Activated CD8-positive, alpha-beta memory T cell treated with anti-CD3 and anti-CD28 coated beads, Interleukin-2, amount 10 ng/mL, durations not matched to agents 7 days and 5 days (primary cell): ENCODE measurements at regions of chr5 and their contacts with region 1.

Region 1: GRCh38 chr5:142012792-142013388 is at the start of gene GNPDA1:
- DNase-seq: peak; percentile 74
- ATAC-seq: peak; percentile 59
- H3K4me3 Mint-ChIP-seq: peak within 1 kb of the TSS; percentile 74
- H3K27ac Mint-ChIP-seq: peak within 1 kb of the TSS; percentile 81
- H3K4me1 Mint-ChIP-seq: peaks cover 57% of the 10 kb centered on the region
- H3K27me3 Mint-ChIP-seq: peaks cover 14% of the 10 kb centered on the region
- total RNA-seq, gene GNPDA1: 7.7 to 10.0 TPM

Region 2: DNA sequence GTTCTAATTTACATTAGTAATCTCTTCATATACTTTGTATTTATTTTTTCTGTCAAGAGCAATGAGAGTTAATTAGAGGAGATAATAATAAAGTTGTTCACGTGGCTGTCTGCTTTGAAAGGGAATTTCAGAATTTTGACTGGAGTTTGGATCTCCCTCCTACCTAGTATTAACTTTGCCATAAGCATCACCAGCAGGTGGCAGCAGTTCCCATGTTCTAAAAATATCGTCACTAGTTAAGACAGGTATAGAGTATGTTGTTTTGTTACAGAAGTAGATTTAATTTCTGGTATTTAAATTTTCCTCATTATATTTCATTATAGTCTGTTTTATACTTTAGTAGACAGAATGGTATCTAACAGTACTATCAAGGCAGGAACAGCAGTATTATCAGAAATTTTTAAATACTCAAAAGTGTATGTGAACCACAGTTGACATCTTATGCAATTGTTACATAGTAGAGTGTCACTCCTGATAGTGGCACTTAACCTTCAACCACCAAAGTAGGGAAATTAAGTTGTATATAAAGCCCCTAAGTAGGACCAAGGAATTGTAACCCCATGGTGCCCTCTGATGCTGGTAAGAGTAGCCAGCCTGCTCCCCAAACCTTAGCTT is 20.4 kb before region 1 on chr5:
- CTCF ChIA-PET with region 1: interaction called, 72 read pairs
- DNase-seq: peak; percentile 84
- ATAC-seq: peak; percentile 71
- H3K4me3 Mint-ChIP-seq: no peak overlapping the region
- H3K27ac Mint-ChIP-seq: no peak overlapping the region
- H3K4me1 Mint-ChIP-seq: no peaks in the 10 kb centered on the region
- H3K27me3 Mint-ChIP-seq: no peaks in the 10 kb centered on the region

Region 3: DNA sequence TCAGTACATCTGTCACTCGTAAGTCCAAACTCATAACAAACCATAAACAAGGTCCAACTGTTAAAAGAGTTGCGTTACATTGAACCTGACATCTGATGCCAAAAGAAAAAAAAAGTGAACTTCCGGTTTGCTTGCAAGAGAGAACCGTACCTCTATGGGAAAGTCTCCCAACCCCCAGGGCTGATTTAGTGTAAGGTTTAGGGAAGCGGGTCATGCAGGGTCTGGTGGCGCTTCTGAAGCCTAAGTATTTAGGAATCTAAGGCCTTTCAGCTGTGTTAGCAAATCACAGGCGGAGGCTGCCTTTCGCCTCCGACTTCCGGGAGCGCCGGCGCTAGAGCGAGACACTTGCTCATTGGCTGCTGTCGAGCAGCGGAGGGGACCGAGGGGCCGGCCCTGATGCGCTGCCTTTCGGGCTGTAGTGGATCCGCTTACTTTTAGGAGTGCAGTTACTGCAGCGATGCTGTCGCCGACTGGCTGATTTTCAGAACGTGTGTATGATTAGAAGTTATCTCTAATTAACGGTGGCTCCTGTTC is 11.9 kb after region 1 on chr5:
- CTCF ChIA-PET with region 1: interaction called, 12 read pairs
- DNase-seq: peak; percentile 92
- ATAC-seq: peak; percentile 100
- H3K4me3 Mint-ChIP-seq: peak overlapping the region; percentile 81
- H3K27ac Mint-ChIP-seq: peak overlapping the region; percentile 98
- H3K4me1 Mint-ChIP-seq: peaks cover 16% of the 10 kb centered on the region
- H3K27me3 Mint-ChIP-seq: peaks cover 19% of the 10 kb centered on the region

Region 4: GRCh38 chr5:142108432-142109330 is 95.8 kb after region 1 on chr5 and contains the start of gene NDFIP1:
- CTCF ChIA-PET with region 1: interaction called, 42 read pairs
- DNase-seq: peak; percentile 88
- ATAC-seq: peak; percentile 95
- H3K4me3 Mint-ChIP-seq: peak within 1 kb of the TSS; percentile 87
- H3K27ac Mint-ChIP-seq: peak within 1 kb of the TSS; percentile 89
- H3K4me1 Mint-ChIP-seq: peaks cover 44% of the 10 kb centered on the region
- H3K27me3 Mint-ChIP-seq: no peaks in the 10 kb centered on the region
- total RNA-seq, gene NDFIP1: 28.5 to 31.7 TPM

Region 5: DNA sequence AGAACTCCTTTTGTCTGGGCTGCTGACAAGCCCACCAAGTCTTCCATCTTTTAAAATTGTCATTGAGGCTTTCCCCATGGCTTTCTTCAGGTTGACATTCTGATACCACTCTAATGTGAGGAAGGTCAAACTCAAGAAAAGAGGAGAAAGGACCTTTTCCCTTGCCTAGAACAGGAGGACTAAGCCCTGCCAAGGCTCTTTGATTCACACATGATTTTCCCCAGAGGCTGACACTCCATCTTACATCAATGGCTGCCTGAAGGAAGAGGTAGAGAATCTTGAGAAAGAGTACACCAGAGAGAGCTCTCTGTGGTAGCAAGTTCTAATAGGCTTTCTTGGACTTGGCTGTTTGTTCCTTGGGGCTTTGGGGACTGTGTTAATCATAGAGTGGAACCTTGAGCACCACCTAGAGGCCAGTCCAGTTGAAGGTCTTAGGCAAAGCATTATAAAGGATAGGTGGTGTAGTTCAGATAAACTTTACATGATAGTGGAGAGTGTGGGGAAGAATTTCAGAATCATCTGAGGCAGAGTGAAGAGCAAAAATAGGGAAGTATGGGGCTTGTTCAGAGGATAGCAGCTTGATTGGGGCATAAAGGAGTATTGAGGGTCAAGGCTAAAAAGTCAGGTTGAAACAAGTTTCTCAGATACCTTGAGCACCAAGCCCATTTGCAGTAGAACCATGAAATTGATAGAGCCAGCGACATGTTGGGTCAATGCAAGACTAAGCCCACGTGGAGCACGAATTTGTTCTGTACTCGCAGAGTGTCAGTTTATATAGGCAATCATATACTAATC is 132.4 kb after region 1 on chr5:
- CTCF ChIA-PET with region 1: interaction called, 33 read pairs
- DNase-seq: peak; percentile 75
- ATAC-seq: peak; percentile 89
- H3K4me3 Mint-ChIP-seq: no peak overlapping the region
- H3K27ac Mint-ChIP-seq: no peak overlapping the region
- H3K4me1 Mint-ChIP-seq: no peaks in the 10 kb centered on the region
- H3K27me3 Mint-ChIP-seq: no peaks in the 10 kb centered on the region